PC-9 (cell line): ENCODE measurements at regions of chr22 and their contacts with region 1.

Region 1: DNA sequence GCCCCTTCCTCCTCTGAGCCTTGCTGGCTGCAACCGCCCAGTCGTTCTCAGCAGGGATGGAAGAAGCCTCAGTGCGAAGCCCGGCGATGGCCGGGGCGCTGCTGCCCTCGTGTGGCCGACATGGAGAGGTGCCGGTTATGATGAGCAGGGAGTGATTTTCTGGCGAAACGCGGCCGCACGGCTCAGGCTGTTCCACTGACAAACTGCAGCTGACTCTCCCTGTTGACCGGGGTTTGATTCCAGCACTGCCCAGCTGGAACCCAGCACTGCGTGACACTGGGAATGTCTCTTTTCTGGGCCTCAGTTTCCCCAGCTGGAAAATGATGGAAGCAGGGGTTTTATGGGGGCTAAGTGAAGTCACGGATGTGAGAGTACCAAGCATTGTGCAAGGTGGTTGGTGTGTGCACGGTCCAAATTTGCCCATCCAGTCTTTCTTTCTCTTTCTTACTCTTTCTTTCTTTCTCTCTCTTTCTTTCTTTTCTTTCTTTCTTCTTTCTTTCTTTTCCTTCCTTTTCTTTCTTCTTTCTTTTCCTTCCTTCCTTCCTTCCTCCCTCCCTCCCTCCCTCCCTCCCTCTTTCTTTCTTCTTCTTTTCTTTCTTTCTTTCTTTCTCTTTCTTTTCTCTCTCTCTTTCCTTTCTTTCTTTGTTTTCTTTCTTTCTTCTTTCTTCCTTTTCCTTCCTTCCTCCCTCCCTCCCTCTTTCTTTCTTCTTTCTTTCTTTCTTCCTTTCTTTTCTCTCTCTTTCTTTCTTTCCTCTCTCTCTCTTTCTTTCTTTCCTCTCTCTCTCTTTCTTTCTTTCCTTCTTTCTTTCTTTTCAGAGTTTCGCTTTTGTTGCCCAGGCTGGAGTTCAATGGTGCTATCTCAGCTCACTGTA is 25.8 kb upstream of the MPPED1 start:
- DNase-seq: peak; percentile 48 to 68
- H3K4me3 ChIP-seq: no peak overlapping the region
- H3K27ac ChIP-seq: no peak overlapping the region
- H3K4me1 ChIP-seq: no peaks in the 10 kb centered on the region
- H3K27me3 ChIP-seq: peaks cover 95% of the 10 kb centered on the region
- CTCF ChIP-seq: peak; percentile 96

Region 2: DNA sequence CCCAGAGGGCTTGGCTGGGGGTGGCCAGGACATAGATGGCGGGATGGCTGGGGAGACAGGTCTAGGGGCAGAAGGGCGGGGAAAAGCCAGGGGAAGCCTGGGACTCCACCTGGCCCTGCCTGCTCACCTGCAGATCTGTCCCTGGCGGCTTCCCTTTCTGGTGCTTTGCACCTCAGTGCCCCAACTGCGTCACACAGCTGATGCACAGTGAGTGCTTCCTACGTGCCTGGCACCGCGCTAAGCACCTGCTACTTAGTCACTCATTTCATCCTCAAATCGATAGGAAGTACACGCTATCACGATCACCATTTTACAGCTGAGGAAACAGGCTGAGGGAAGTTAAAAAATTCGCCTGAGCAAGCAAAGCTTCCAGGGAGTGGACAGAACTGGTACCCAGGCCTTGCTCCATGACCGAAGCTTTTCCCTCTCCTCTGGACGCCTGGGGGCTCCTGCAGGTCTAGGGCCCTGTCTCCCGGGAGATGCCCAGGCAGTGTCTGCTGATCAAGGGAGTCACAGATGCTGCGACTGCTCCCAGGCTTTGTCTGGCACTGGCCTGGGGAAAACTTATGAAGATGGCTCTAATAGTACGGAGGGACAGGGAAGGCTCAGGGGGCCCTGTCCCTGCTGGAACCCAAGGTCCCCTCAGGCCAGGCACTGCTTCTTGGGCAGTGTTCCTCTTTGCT is 136.1 kb before region 1 on chr22:
- CTCF ChIA-PET with region 1: no interaction called
- POLR2A ChIA-PET with region 1: no interaction called
- intact Hi-C with region 1: no loop called
- DNase-seq: no peak
- H3K4me3 ChIP-seq: no peak overlapping the region
- H3K27ac ChIP-seq: no peak overlapping the region
- H3K4me1 ChIP-seq: peaks cover 9% of the 10 kb centered on the region
- H3K27me3 ChIP-seq: peaks cover 23% of the 10 kb centered on the region; the same call in 1 of the 2 replicates
- CTCF ChIP-seq: no peak

Region 3: GRCh38 chr22:43273902-43274484 is 112.0 kb before region 1 on chr22:
- CTCF ChIA-PET with region 1: interaction called, 8 read pairs
- POLR2A ChIA-PET with region 1: no interaction called
- intact Hi-C with region 1: loop called (anchors 1 kb)
- DNase-seq: peak; percentile 43 to 55
- H3K4me3 ChIP-seq: no peak overlapping the region
- H3K27ac ChIP-seq: no peak overlapping the region
- H3K4me1 ChIP-seq: peaks cover 15% of the 10 kb centered on the region
- H3K27me3 ChIP-seq: peaks cover 25% of the 10 kb centered on the region
- CTCF ChIP-seq: peak; percentile 92

Region 4: DNA sequence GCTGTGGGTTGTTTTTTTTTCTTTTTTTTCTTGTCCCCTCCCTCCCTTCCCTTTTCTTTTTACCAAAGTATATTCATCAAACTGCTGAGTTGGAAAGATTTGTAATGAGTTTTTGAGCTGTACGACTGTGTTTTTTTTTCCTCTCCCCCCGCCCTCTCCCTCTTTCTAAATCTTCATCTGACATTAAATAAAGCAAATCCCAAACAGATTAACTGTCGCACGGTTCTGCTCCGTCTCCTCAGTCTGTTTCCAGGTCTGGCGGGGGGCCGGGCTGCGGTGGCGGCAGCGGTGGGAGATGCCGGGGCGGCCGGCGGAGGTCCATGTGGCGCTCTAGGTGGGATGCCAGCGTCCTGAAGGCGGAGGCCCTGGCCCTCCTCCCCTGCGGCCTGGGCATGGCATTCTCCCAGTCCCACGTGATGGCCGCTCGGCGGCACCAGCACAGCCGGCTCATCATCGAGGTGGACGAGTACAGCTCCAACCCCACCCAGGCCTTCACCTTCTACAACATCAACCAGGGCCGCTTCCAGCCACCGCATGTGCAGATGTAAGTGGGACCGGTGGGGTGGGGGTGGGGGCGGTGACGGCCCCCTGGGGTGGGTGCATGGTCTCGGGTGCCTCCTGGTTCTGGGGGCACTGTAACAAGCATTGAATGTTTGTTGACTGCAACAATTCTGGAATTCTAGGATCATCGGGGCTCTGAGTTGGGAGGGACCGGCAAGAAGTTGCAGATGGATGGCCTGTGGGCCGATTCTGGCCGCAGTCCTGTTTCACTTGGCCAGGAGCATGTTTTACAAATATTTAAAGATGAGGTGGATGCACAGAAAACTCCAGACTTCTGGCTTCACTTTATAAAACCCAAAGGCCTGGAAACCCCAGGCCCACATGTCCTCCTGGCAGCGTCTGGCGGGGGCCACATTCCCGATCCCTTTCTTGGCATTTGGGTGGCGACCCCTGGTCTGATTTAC is 38.9 kb after region 1 on chr22:
- CTCF ChIA-PET with region 1: no interaction called
- POLR2A ChIA-PET with region 1: no interaction called
- intact Hi-C with region 1: no loop called
- DNase-seq: no peak
- H3K4me3 ChIP-seq: no peak overlapping the region
- H3K27ac ChIP-seq: no peak overlapping the region
- H3K4me1 ChIP-seq: no peaks in the 10 kb centered on the region
- H3K27me3 ChIP-seq: peaks cover 99% of the 10 kb centered on the region
- CTCF ChIP-seq: no peak

Region 5: GRCh38 chr22:43521716-43522115 is 135.7 kb after region 1 on chr22:
- CTCF ChIA-PET with region 1: no interaction called
- POLR2A ChIA-PET with region 1: no interaction called
- intact Hi-C with region 1: no loop called
- DNase-seq: peak in 1 of 2 experiments; percentile 43
- H3K4me3 ChIP-seq: no peak overlapping the region
- H3K27ac ChIP-seq: no peak overlapping the region
- H3K4me1 ChIP-seq: no peaks in the 10 kb centered on the region
- H3K27me3 ChIP-seq: peaks cover 89% of the 10 kb centered on the region
- CTCF ChIP-seq: no peak

Region 6: GRCh38 chr22:43796567-43796966 is 410.6 kb after region 1 on chr22:
- CTCF ChIA-PET with region 1: no interaction called
- POLR2A ChIA-PET with region 1: no interaction called
- intact Hi-C with region 1: loop called (anchors 1 kb)
- DNase-seq: no peak
- H3K4me3 ChIP-seq: no peak overlapping the region
- H3K27ac ChIP-seq: no peak overlapping the region
- H3K4me1 ChIP-seq: no peaks in the 10 kb centered on the region
- H3K27me3 ChIP-seq: peaks cover 16% of the 10 kb centered on the region; the same call in 1 of the 2 replicates
- CTCF ChIP-seq: peak; percentile 42; the same call in 1 of the 2 replicates

Region 7: GRCh38 chr22:43826142-43827002 is 440.4 kb after region 1 on chr22:
- CTCF ChIA-PET with region 1: no interaction called
- POLR2A ChIA-PET with region 1: no interaction called
- intact Hi-C with region 1: loop called (anchors 1 kb)
- DNase-seq: no peak
- H3K4me3 ChIP-seq: no peak overlapping the region
- H3K27ac ChIP-seq: no peak overlapping the region
- H3K4me1 ChIP-seq: no peaks in the 10 kb centered on the region
- H3K27me3 ChIP-seq: peaks cover 36% of the 10 kb centered on the region
- CTCF ChIP-seq: peak; percentile 55